ENCODE measurements at regions of chr14 and their contacts with region 1.

Region 1: GRCh38 chr14:30375296-30375892 is 183.6 kb upstream of the G2E3 start:
- DNase-seq: peak; percentile 73
- H3K4me3 ChIP-seq: no peak overlapping the region
- H3K27ac ChIP-seq: no peak overlapping the region
- H3K4me1 ChIP-seq: no peaks in the 10 kb centered on the region
- H3K27me3 ChIP-seq: peaks cover 97% of the 10 kb centered on the region
- CTCF ChIP-seq: peak; percentile 87

Region 2: GRCh38 chr14:30252783-30253674 is 122.4 kb before region 1 on chr14:
- CTCF ChIA-PET with region 1: no interaction called
- POLR2A ChIA-PET with region 1: no interaction called
- intact Hi-C with region 1: no loop called
- DNase-seq: no peak
- H3K4me3 ChIP-seq: no peak overlapping the region
- H3K27ac ChIP-seq: no peak overlapping the region
- H3K4me1 ChIP-seq: no peaks in the 10 kb centered on the region
- H3K27me3 ChIP-seq: peaks cover 23% of the 10 kb centered on the region
- CTCF ChIP-seq: no peak

Region 3: DNA sequence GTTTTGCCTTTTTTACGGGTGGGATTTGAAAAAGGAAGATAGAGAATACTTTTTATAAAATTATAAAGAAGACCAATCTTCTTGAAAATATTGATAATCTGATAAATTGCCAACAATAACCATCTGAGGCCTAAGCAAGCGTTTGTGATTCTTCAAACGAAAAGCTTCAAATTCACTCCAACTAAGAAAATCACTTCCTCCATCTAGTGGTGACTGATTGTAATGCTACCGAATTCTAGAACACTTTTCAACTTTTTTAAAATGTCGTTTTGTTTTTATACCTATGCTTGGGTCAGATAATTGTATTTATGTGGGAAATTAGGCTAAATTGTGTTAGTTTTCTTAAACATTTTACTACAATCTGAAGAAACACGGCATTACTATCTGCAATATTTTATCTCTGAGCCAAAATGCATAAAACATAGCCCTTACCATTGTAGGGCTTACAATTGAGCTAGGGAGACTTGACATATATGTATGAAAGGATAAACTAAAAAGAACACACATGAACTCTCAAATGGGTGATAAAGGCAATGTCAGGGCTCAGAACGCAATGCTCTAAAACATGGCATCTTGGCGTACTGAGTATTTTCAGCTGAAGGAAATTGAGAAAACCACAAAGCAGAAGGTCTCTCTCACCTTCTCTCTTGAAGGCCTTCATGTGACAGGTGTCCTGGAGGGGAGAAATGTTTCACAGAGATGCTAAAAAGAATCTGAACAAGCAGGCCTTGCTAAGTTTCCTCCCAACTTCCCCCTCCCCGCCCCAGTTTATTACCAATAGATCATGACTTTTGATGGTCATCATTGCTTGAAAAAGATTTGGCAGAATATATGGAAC is 146.7 kb after region 1 on chr14:
- CTCF ChIA-PET with region 1: interaction called, 4 read pairs
- POLR2A ChIA-PET with region 1: no interaction called
- intact Hi-C with region 1: loop called (anchors 1 kb)
- DNase-seq: peak; percentile 46
- H3K4me3 ChIP-seq: no peak overlapping the region
- H3K27ac ChIP-seq: no peak overlapping the region
- H3K4me1 ChIP-seq: no peaks in the 10 kb centered on the region
- H3K27me3 ChIP-seq: peaks cover 6% of the 10 kb centered on the region
- CTCF ChIP-seq: peak; percentile 77

Region 4: DNA sequence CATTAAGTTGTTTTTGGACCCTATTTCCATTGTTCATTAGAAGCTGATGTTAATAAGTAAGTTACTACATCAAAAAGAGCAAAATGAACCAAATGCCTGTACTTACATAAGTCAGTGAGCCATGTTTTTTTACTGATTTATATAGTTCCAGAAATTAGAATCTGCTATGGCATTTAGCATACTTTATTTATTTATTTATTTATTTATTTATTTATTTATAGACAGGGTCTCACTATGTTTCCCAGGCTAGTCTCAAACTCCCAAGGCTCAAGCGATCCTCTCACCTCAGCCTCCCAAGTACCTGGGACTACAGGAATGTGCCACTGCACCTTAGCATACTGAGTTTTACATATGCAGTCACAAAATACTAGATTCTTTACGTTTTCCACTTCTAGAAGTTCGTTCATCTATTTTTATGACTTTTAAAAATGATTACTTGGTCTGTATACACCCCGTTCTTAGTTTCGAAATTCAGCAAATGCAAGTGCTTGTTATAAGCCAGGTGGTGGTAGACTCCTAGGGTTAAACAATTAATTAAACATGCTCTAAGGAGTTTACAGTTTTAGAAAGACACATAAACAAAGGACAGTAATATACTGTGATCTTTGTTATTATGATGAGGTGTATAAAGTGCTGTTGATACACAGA is 316.5 kb after region 1 on chr14:
- CTCF ChIA-PET with region 1: no interaction called
- POLR2A ChIA-PET with region 1: no interaction called
- intact Hi-C with region 1: no loop called
- DNase-seq: no peak
- H3K4me3 ChIP-seq: no peak overlapping the region
- H3K27ac ChIP-seq: no peak overlapping the region
- H3K4me1 ChIP-seq: no peaks in the 10 kb centered on the region
- H3K27me3 ChIP-seq: no peaks in the 10 kb centered on the region
- CTCF ChIP-seq: no peak